Heart right ventricle (tissue), 16 donors: ENCODE measurements at regions of chr11 and their contacts with region 1.

Region 1: GRCh38 chr11:65013692-65014145 is 241 bp upstream of the ARL2 start:
- DNase-seq: peak; percentile 94
- ATAC-seq: peak; percentile 93 to 96 (median 96)
- H3K4me3 ChIP-seq: peak overlapping the region; percentile 57 to 92 (median 76)
- H3K27ac ChIP-seq: peak overlapping the region; percentile 87 to 100 (median 98)
- H3K4me1 ChIP-seq: peaks cover 11 to 34% (median 20%) of the 10 kb centered on the region in 9 donors
- H3K27me3 ChIP-seq: no peaks in the 10 kb centered on the region
- CTCF ChIP-seq: peak in 2 of 9 donors; percentile 61 to 63

Region 2: GRCh38 chr11:64916775-64917662 is 96.7 kb before region 1 on chr11 and contains the start of gene ATG2A:
- intact Hi-C with region 1: loop called in 3 of 10 experiments (anchors 5 kb)
- DNase-seq: peak; percentile 99
- ATAC-seq: peak; percentile 97 to 100 (median 98)
- H3K4me3 ChIP-seq: peak within 1 kb of the TSS; percentile 63 to 98 (median 86)
- H3K27ac ChIP-seq: peak within 1 kb of the TSS; percentile 27 to 96 (median 84)
- H3K4me1 ChIP-seq: peaks cover 5 to 43% (median 34%) of the 10 kb centered on the region in 9 donors
- H3K27me3 ChIP-seq: no peaks in the 10 kb centered on the region
- CTCF ChIP-seq: peak in 1 of 9 donors; percentile 11
- total RNA-seq, gene ATG2A: 12.4 to 17.7 (median 16.0) TPM

Region 3: GRCh38 chr11:64969209-64969608 is 44.5 kb before region 1 on chr11:
- intact Hi-C with region 1: no loop called
- DNase-seq: no peak
- ATAC-seq: no peak
- H3K4me3 ChIP-seq: no peak overlapping the region
- H3K27ac ChIP-seq: no peak overlapping the region
- H3K4me1 ChIP-seq: peaks cover 3 to 15% (median 10%) of the 10 kb centered on the region in 9 donors
- H3K27me3 ChIP-seq: peaks cover 0 to 27% (median 0%) of the 10 kb centered on the region in 7 donors
- CTCF ChIP-seq: no peak

Region 4: DNA sequence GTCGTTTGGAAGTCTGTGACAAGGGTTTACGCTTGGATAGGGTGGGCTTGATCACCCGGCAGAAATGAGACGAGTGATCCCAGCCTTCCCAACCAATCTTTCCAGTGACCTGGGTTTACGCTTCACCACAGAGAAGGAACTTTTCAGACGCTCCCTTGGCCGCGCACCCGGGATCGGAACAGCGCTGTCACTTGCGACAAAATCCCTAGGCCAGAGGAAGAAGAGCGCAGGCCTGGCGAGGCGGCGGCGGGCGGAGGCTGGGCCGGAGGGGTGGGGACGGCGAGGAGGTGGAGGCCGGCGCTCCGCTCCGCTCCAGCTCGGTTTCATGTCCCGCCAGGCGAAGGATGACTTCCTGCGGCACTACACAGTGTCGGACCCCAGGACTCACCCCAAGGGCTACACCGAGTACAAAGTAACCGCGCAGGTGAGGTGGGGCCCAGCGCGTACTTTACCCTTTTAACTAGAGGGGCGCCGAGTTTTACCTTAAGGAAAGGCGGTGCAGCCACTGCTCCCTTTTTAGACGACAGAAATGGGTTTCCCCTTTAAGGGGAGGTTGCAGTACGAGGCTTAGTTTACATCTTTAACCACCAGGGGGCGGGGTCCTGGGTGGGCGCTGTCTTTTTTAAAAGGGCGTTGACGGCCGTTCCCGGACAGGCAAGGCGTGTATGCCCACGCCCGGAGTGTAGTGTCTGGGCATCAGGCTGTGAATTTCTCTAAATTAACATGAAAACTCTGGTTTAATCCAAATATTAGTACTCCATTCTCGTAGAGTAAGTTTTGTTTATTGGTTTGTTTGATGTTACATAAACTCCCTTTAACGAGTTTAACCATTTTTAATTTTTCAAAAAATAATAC is 13.7 kb after region 1 on chr11 and contains the start of gene SNX15:
- intact Hi-C with region 1: loop called in 2 of 10 experiments (anchors 1 kb)
- DNase-seq: peak; percentile 93 to 96
- ATAC-seq: peak; percentile 98 to 99 (median 99)
- H3K4me3 ChIP-seq: peak within 1 kb of the TSS; percentile 2 to 68 (median 64)
- H3K27ac ChIP-seq: peak within 1 kb of the TSS; percentile 82 to 92 (median 88)
- H3K4me1 ChIP-seq: peaks cover 0 to 22% (median 17%) of the 10 kb centered on the region in 9 donors
- H3K27me3 ChIP-seq: no peaks in the 10 kb centered on the region
- CTCF ChIP-seq: peak; percentile 75 to 92 (median 88)
- total RNA-seq, gene SNX15: 11.4 to 21.8 (median 15.2) TPM